ENCODE measurements at regions of chr13 and their contacts with region 1.

Region 1: GRCh38 chr13:29771247-29771646 is 79.2 kb downstream of the UBL3 start:
- DNase-seq: no peak
- ATAC-seq: no peak
- H3K4me3 ChIP-seq: no peak overlapping the region
- H3K27ac ChIP-seq: no peak overlapping the region
- H3K4me1 ChIP-seq: peaks cover 12% of the 10 kb centered on the region
- H3K27me3 ChIP-seq: no peaks in the 10 kb centered on the region
- CTCF ChIP-seq: peak in 6 of 7 experiments; percentile 35 to 62 (median 58)
- POLR2A ChIP-seq: no peak

Region 2: GRCh38 chr13:29369060-29369743 is 402.0 kb before region 1 on chr13:
- intact Hi-C with region 1: no loop called
- DNase-seq: peak in 3 of 4 donors; percentile 16 to 26 (median 16)
- ATAC-seq: peak; percentile 75
- H3K4me3 ChIP-seq: no peak overlapping the region
- H3K27ac ChIP-seq: no peak overlapping the region
- H3K4me1 ChIP-seq: peaks cover 5% of the 10 kb centered on the region
- H3K27me3 ChIP-seq: no peaks in the 10 kb centered on the region
- CTCF ChIP-seq: peak; percentile 26 to 55 (median 46)
- POLR2A ChIP-seq: no peak

Region 3: DNA sequence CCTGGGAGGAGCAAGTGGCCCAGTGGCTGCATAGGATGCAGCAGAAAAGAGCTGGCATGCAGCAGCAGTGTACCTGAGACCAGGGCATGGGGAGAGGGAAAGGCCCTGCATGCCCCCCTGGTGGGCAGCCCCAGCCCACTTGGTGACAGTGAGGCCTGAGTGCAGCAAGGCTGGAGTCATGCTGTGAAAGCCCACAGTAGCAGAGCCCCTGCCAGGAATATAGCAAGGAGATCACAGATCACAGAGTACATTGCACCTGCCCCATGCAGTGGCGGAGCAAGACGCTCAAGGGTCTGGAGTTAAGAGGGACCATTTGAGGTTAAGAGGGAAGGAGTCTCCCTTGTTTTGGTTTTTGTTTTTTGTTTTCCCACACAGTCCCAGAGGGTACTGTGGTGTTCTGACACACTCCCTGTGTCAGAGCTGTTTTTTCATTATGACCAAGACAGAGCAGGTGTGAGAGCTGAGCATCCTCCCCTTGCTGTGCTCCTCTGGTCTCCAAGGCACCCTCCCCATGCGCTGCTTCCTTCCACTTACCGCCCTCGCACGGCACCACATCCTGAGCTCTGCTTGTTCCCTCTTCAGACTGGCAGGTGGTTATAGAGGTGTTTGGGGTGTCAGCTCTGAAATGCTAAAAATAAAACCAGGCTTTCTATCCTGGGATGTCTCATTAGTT is 164.2 kb after region 1 on chr13:
- intact Hi-C with region 1: loop called (anchors 10 kb)
- DNase-seq: peak in 1 of 4 donors; percentile 45
- ATAC-seq: no peak
- H3K4me3 ChIP-seq: no peak overlapping the region
- H3K27ac ChIP-seq: peak overlapping the region in 3 of 4 donors; percentile 22 to 46 (median 33)
- H3K4me1 ChIP-seq: peaks cover 8% of the 10 kb centered on the region
- H3K27me3 ChIP-seq: no peaks in the 10 kb centered on the region
- CTCF ChIP-seq: no peak
- POLR2A ChIP-seq: no peak

Region 4: DNA sequence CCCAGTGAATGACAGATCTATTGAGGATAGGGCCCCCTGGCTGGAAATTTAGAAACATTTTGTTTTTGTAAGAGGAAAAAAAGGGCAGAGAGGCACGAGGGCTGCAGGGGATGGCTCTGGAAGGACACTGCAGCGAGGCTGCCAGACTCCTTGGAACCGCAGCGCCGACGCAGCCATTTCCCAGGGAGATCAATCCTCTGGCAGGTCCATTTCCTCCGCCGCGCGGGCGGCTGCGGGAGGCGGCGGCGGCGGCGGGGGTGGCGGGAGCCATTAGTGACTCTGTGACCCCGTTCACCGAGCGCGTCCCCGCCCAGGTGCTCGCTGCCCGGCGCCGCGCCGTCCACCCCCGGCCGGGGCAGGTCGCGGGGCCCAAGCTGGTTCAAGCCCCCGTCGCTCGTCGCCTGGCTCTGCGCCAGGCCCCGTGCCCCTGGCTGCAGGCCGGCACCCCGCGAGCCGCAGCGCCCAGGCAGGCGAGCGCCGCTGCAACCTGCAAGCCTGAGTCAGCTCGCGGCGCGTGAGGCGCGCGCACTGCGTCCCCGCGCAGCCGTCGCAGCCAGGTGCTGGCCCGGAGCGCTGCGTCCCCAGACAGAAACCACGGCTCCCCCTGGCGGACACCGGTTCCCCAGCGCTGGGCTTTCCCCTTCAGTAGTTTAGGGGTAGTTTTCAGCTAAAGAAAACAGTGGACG is 343.5 kb after region 1 on chr13:
- intact Hi-C with region 1: loop called (anchors 5 kb)
- DNase-seq: peak; percentile 92 to 96 (median 92)
- ATAC-seq: peak; percentile 87
- H3K4me3 ChIP-seq: peak overlapping the region in 1 of 2 donors; percentile 26
- H3K27ac ChIP-seq: peak overlapping the region; percentile 75 to 91 (median 82)
- H3K4me1 ChIP-seq: peaks cover 36% of the 10 kb centered on the region
- H3K27me3 ChIP-seq: no peaks in the 10 kb centered on the region
- CTCF ChIP-seq: peak; percentile 87 to 97 (median 93)
- POLR2A ChIP-seq: peak; percentile 33 to 61 (median 50)